ENCODE measurements at regions of chr2 and their contacts with region 1.

Region 1: GRCh38 chr2:69012310-69013141 is 453 bp upstream of the ANTXR1 start:
- DNase-seq: no peak
- H3K4me3 Mint-ChIP-seq: peak overlapping the region; percentile 75
- H3K27ac Mint-ChIP-seq: no peak overlapping the region
- H3K4me1 Mint-ChIP-seq: peaks cover 10% of the 10 kb centered on the region
- H3K27me3 Mint-ChIP-seq: peaks cover 61% of the 10 kb centered on the region

Region 2: DNA sequence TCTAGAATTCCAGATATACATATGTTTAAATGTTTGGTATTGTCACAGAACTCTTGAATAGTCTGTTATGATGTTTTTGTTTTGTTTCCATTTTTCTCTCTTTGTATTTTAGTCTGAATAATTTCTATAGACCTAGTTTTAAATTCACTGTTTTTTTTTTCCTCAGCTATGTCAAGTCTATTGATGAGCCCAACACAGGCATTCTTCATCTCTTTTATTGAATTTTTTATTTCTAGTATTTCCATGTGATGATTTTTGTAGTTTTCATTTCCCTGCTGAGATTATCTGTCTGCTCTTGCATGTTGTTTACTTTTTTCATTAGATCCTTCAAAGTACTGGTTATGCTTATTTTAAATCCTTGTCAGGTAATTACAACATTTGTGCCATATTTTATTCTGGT is 1204.4 kb before region 1 on chr2:
- intact Hi-C with region 1: no loop called
- DNase-seq: no peak
- H3K4me3 Mint-ChIP-seq: no peak overlapping the region
- H3K27ac Mint-ChIP-seq: no peak overlapping the region
- H3K4me1 Mint-ChIP-seq: no peaks in the 10 kb centered on the region
- H3K27me3 Mint-ChIP-seq: no peaks in the 10 kb centered on the region

Region 3: DNA sequence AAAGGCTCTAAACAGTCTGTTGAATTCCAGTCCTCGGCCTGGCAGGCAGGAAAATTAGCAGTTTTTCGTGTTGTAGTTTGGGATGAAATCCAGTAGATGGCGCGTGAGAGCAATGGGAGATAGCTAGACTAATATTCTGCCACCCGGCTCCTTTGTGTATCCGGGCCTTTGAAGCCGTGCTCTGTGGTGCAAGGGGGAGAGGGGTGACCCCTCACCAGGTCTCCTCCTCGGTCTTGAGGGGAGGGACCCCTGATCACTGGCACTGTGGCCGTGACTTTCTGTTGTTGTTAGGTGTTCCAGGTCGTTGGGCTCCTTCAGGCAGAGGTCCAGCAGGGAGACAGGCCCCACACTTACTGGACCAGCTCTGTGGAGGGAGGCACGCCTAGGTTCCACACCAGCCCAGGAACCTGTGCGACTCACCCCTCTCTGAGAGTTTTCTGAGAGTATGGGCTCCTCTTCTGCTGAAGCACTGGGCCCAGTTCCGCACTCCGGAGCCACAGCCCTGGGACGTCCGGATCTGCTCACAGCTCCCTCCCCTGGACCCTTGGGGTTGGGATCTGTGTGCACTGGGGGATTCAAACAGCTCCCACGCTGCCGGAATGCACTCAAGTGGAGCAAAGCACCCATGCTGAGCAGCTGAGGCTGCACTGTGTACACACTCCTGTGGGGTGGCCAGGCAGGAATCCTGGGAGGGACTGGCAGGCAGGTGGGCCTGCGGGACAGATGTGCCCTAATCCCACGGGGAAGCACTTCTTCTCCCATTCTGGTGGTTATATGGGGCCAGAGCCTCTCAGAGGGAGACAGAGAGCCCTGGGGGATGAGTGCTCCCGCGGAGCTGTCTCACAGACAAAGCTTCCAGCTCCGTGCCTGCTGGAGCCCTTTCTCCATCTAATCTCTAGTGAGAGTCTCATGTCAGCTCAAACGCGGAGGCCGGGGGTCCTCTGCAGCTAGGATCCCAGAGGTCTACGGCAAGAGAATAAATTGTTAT is 68.7 kb before region 1 on chr2:
- intact Hi-C with region 1: loop called (anchors 5 kb)
- DNase-seq: peak; percentile 35
- H3K4me3 Mint-ChIP-seq: no peak overlapping the region
- H3K27ac Mint-ChIP-seq: no peak overlapping the region
- H3K4me1 Mint-ChIP-seq: peaks cover 4% of the 10 kb centered on the region
- H3K27me3 Mint-ChIP-seq: peaks cover 59% of the 10 kb centered on the region

Region 4: DNA sequence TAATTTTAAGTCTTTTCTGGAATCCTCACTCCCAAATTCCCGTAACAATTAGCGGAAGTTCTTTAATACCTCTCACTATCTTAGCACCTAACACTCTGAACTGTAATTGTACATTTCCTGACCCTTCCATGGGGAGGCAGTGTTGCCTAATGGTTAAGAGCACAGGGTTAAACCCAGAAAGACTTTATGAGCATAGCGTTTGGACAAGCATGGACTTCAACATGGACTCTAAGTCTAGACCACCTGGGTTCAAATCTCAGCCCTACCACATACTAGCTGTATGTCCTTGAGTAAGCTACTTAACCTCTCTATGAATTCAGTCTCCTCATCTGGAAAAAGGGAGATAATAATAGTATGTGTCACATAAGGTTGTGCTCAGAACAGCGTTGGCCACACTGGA is 13.5 kb after region 1 on chr2:
- intact Hi-C with region 1: no loop called
- DNase-seq: no peak
- H3K4me3 Mint-ChIP-seq: no peak overlapping the region
- H3K27ac Mint-ChIP-seq: no peak overlapping the region
- H3K4me1 Mint-ChIP-seq: no peaks in the 10 kb centered on the region
- H3K27me3 Mint-ChIP-seq: peaks cover 25% of the 10 kb centered on the region

Region 5: DNA sequence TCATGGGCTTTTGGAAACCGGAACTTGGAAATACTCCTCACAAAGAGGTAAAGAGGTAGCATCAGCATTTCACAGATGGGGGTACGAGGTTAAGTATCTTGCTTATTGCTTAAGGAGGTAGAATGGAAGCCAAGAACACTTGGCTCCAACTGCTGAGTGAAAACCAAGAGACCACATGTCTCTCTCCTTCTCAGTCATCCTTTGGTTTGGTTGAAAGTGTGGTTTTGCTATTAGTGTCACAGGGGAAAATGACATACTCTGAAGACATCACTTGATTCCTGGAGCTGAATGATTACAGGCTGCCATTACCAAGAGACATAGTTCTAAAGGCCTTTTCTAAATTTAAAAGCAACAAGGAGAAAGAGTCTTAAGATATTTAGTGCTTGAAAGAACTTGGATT is 41.9 kb after region 1 on chr2:
- intact Hi-C with region 1: loop called (anchors 2 kb)
- DNase-seq: no peak
- H3K4me3 Mint-ChIP-seq: no peak overlapping the region
- H3K27ac Mint-ChIP-seq: peak overlapping the region; percentile 62
- H3K4me1 Mint-ChIP-seq: peaks cover 24% of the 10 kb centered on the region
- H3K27me3 Mint-ChIP-seq: peaks cover 47% of the 10 kb centered on the region

Region 6: GRCh38 chr2:69082430-69082997 is 70.0 kb after region 1 on chr2:
- intact Hi-C with region 1: no loop called
- DNase-seq: no peak
- H3K4me3 Mint-ChIP-seq: no peak overlapping the region
- H3K27ac Mint-ChIP-seq: no peak overlapping the region
- H3K4me1 Mint-ChIP-seq: peaks cover 5% of the 10 kb centered on the region
- H3K27me3 Mint-ChIP-seq: peaks cover 53% of the 10 kb centered on the region

Region 7: GRCh38 chr2:69306822-69307578 is 294.5 kb after region 1 on chr2:
- intact Hi-C with region 1: loop called (anchors 5 kb)
- DNase-seq: peak; percentile 56
- H3K4me3 Mint-ChIP-seq: peak overlapping the region; percentile 56
- H3K27ac Mint-ChIP-seq: no peak overlapping the region
- H3K4me1 Mint-ChIP-seq: peaks cover 7% of the 10 kb centered on the region
- H3K27me3 Mint-ChIP-seq: peaks cover 32% of the 10 kb centered on the region